Posterior cingulate gyrus (tissue), 11 donors: ENCODE measurements at regions of chr20 and their contacts with region 1.

Region 1: DNA sequence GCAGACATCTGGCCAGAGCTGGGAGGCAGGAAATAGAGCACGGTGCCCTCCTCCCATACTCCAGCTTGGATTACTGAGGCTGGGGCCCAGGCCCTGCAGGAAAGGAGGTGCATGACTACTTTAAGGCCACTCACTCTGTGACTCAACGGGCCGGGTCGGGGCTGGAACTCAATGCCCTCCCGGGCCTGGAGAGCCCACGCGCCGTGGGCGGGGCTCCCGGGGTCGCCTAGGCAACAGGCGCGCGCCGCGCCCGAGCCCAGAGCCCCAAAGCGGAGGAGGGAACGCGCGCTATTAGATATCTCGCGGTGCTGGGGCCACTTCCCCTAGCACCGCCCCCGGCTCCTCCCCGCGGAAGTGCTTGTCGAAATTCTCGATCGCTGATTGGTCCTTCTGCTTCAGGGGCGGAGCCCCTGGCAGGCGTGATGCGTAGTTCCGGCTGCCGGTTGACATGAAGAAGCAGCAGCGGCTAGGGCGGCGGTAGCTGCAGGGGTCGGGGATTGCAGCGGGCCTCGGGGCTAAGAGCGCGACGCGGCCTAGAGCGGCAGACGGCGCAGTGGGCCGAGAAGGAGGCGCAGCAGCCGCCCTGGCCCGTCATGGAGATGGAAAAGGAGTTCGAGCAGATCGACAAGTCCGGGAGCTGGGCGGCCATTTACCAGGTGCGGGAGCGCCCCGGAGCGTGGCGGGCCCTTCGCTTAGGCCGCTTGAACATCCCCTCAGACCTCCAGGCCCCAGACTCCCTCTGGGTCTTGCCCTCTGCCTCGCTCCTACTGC is at the start of gene PTPN1:
- DNase-seq: peak; percentile 95 to 100 (median 99)

Region 2: GRCh38 chr20:50575847-50576720 is 66.0 kb after region 1 on chr20:
- intact Hi-C with region 1: loop called (anchors 5 kb)
- DNase-seq: peak in 8 of 10 donors; percentile 58 to 94 (median 72)

Region 3: DNA sequence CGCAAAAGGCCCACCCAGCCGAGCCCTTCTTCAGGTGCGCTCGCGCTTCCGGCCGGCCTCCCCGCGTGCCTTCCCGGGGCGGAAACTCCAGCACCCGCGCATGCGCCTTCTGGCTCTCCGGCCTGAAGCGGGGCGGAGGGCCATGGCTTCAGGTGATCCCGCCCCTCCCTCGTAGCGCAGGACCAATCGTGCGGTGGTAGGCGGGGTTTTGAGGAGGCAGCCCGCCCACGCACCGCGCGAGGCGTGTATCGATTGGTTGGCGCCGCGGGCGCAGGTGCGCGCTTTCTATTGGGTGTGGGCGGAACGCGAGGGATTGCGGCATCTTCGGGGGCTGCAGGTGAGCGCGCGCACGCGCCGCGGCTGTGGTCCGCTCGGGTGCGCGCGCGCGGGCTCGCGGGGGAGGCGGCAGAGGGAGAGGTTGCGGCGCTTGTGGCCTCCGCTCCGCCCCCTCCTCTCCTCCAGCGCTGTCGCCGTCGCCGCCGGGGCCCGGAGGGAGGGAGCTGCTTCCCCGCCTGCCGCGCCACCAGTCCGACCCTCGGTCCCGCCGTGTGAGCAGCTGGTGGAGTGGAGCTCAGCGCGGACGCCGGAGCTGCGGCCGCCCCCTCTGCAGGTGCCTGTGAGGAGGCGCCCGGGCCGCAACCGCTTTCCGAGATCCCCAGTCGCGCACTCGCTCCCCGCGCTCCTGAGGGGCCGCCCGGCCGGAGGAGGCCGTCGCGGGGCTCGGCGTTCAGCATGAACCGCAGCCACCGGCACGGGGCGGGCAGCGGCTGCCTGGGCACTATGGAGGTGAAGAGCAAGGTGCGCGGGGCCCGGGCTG is 221.1 kb after region 1 on chr20 and contains the start of gene PARD6B:
- intact Hi-C with region 1: loop called (anchors 2 kb)
- DNase-seq: peak; percentile 90 to 100 (median 97)